ENCODE measurements at regions of chr10 and their contacts with region 1.

Region 1: GRCh38 chr10:110210674-110211464 is 3.5 kb downstream of the MXI1 start:
- DNase-seq: peak; percentile 96 to 97
- ATAC-seq: peak; percentile 93
- H3K4me3 ChIP-seq: peak overlapping the region; percentile 78 to 94 (median 84)
- H3K27ac ChIP-seq: peak overlapping the region; percentile 89 to 98 (median 98)
- H3K4me1 ChIP-seq: peaks cover 6 to 27% of the 10 kb centered on the region in 2 donors
- H3K27me3 ChIP-seq: no peaks in the 10 kb centered on the region
- CTCF ChIP-seq: no peak
- POLR2A ChIP-seq: peak; percentile 65 to 86

Region 2: DNA sequence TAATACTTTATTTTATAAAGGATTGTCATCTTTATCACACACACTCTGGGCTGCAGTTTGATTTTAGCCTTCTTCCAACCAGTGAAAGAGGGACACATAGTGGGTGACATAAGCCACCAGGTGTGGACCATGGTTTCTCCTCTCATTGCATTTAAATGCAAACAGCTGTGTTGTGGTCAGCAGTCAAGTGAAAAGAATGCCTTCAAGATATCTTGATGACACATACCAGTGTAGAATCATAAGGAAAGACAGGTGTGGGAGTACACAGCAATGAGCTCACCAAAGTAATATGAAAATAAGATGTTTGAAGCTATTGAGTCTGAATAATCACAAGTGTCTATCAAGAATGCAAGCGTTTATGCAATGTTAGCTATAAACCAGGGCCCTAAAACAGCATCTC is 867.6 kb before region 1 on chr10:
- in situ Hi-C with region 1: no loop called
- intact Hi-C with region 1: no loop called
- DNase-seq: no peak
- ATAC-seq: no peak
- H3K4me3 ChIP-seq: no peak overlapping the region
- H3K27ac ChIP-seq: no peak overlapping the region
- H3K4me1 ChIP-seq: no peaks in the 10 kb centered on the region
- H3K27me3 ChIP-seq: no peaks in the 10 kb centered on the region
- CTCF ChIP-seq: no peak
- POLR2A ChIP-seq: no peak

Region 3: GRCh38 chr10:110007701-110008517 is 203.0 kb before region 1 on chr10 and contains the start of gene ADD3:
- in situ Hi-C with region 1: no loop called
- intact Hi-C with region 1: loop called (anchors 2 kb)
- DNase-seq: peak; percentile 85
- ATAC-seq: peak; percentile 75 to 80
- H3K4me3 ChIP-seq: peak within 1 kb of the TSS; percentile 89 to 98 (median 94)
- H3K27ac ChIP-seq: peak within 1 kb of the TSS; percentile 82 to 89 (median 86)
- H3K4me1 ChIP-seq: peaks cover 11 to 19% of the 10 kb centered on the region in 2 donors
- H3K27me3 ChIP-seq: no peaks in the 10 kb centered on the region
- CTCF ChIP-seq: no peak
- POLR2A ChIP-seq: peak; percentile 26 to 59
- total RNA-seq, gene ADD3: 16.0 to 31.3 (median 18.4) TPM

Region 4: DNA sequence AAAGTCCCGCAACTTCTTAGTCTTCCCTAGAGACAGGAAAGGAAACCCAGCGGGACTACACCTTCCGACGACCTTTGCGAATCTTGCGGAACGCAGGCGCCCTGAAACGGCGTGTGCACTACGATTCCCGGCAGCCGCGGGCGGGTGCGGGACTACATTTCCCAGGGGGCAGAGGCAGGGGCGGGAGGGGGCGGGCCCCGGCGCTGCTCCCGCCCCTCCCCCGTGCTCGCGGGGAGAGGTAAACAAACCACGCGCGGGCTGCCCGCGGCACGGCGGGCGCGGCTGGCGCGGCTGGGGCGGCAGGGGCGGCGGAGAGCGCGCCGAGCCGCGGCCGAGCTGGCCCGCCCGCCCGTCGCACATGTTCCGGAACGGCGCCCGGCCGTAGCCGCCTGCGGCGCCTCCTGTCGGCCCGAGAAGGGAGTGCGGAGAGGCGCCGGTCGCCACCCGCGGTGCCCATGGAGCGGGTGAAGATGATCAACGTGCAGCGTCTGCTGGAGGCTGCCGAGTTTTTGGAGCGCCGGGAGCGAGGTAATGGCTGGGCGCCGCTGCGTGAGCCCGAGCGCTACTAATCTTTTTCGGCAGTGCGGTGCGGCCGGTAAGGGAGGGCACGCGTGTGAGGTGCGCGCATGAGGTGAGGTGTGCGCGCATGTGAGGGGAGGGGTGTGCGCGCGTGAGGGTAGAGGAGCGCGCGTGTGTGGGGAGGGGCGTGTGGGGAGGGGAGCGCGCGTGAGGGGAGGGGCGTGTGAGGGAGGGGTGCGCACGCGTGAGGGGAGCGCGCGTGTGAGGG is 15.1 kb after region 1 on chr10:
- in situ Hi-C with region 1: no loop called
- intact Hi-C with region 1: loop called (anchors 1 kb)
- DNase-seq: peak; percentile 87 to 90
- ATAC-seq: peak; percentile 73 to 77
- H3K4me3 ChIP-seq: peak overlapping the region; percentile 89 to 95 (median 93)
- H3K27ac ChIP-seq: peak overlapping the region; percentile 99 to 100 (median 99)
- H3K4me1 ChIP-seq: peaks cover 20 to 30% of the 10 kb centered on the region in 2 donors
- H3K27me3 ChIP-seq: no peaks in the 10 kb centered on the region
- CTCF ChIP-seq: peak; percentile 62 to 93 (median 87)
- POLR2A ChIP-seq: peak; percentile 72 to 86

Region 5: DNA sequence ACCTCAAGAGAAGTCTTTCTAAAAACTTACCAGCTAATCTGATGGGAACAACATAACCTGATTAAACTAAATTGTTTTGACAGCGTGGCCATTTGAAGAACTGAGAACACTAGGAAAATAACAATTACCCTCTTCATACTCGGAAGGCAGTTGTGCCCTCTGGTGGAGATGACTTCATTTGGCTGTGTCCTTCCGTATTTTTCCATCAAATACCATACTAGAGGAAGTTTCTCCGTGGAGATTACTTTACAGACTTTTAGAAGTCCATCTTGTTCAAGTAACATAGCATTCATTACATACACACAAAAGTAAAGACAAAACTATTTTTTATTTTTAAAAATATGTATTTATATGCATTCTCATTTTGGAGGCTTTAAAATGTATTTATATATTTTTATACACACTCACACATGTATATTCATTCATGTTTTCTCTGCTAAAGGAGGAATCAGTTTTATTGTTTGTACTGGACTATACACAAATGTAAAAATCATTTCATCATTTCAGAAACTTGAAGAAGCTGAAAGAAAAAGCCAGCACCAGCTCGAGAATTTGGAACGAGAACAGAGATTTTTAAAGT is 68.6 kb after region 1 on chr10:
- in situ Hi-C with region 1: loop called in 1 of 4 experiments (anchors 10 kb)
- intact Hi-C with region 1: loop called (anchors 1 kb)
- DNase-seq: peak; percentile 12 to 40
- ATAC-seq: peak; percentile 69 to 87
- H3K4me3 ChIP-seq: no peak overlapping the region
- H3K27ac ChIP-seq: peak overlapping the region in 1 of 4 donors; percentile 1
- H3K4me1 ChIP-seq: peaks cover 18 to 26% of the 10 kb centered on the region in 2 donors
- H3K27me3 ChIP-seq: no peaks in the 10 kb centered on the region
- CTCF ChIP-seq: peak; percentile 69 to 78 (median 74)
- POLR2A ChIP-seq: no peak

Region 6: DNA sequence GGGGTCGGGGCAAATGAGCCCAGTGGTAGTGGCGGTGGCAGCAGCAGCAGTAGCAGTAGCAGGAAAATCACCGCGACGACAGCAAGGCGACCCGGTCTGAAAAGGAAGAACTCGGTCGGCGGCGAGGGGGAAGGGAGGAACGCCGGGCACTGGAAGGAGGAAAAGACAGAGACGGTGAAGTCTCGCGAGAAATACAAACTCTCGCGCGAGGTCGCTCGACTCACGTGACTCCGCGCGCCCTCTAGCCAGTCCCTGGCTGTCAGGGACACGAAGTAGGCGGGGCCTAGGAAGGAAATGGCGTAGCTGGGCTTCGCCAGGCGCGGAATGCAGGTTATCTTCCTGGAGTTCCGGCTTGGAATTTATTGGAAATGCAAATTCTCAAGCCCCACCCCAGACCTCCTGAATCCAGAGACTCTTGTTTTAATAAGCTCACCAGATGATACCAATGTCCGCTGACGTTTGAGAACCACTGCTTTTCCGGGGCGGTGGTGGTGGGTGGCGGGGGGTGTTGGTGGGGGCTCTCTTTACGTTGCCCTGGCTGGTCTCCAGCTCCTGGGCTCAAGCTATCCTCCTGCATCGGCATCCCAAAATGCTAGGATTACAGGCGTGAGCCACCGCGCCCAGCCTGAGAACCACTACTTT is 94.0 kb after region 1 on chr10 and contains the start of gene SMNDC1:
- in situ Hi-C with region 1: no loop called
- intact Hi-C with region 1: loop called (anchors 1 kb)
- DNase-seq: peak; percentile 94 to 97
- ATAC-seq: peak; percentile 93 to 96
- H3K4me3 ChIP-seq: peak within 1 kb of the TSS; percentile 74 to 88 (median 86)
- H3K27ac ChIP-seq: peak within 1 kb of the TSS; percentile 91 to 95 (median 94)
- H3K4me1 ChIP-seq: peaks cover 42 to 45% of the 10 kb centered on the region in 2 donors
- H3K27me3 ChIP-seq: no peaks in the 10 kb centered on the region
- CTCF ChIP-seq: no peak
- POLR2A ChIP-seq: peak; percentile 68 to 69
- total RNA-seq, gene SMNDC1: 7.3 to 23.9 (median 10.0) TPM

Region 7: DNA sequence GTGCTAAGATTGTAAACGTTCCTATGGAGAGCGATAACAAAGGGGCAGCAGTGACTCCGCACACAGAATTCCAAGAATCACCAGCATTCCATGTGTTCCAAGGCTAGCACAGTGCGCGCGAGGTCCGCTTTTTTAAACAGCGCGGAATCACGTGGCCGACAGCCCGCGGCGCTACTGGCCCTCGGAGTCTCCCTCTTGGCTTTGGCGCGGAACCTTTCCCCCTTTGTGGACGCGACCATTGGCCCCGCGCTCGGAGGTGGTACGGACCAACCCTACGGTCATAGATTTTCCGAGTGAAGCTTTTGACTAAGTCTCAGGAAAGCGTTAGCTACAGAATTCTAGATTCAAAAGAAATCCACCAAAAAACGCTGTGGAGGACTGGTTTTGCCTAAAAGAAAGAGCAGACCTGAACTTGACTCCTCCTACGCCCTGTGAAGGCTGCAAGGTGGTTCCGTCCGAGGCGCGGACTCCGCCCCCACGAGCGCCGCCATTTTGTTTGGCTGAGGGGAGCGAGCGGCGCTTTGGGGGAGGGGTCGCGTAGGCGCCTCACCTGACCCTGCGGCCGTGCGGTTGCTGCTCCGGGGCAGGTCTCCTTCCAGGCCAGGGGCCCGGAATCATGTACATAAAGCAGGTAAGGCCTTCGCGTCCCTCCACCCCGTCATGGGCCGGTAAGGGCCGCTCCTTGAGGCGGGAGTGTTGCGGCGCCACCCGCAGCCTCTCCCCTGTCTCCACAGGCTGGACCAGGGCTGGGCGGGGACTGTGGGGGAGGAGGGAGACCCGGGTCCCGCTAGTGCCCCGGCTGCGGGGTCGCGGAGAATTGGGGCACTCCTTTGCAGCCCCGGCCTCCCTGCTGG is 356.6 kb after region 1 on chr10 and contains the start of gene SMC3:
- in situ Hi-C with region 1: no loop called
- intact Hi-C with region 1: loop called (anchors 2 kb)
- DNase-seq: peak; percentile 82 to 87
- ATAC-seq: peak; percentile 95 to 96
- H3K4me3 ChIP-seq: peak within 1 kb of the TSS; percentile 86 to 100 (median 93)
- H3K27ac ChIP-seq: peak within 1 kb of the TSS; percentile 93 to 99 (median 96)
- H3K4me1 ChIP-seq: peaks cover 36% of the 10 kb centered on the region in 2 donors
- H3K27me3 ChIP-seq: peaks cover 0 to 5% (median 2%) of the 10 kb centered on the region in 3 donors
- CTCF ChIP-seq: no peak
- POLR2A ChIP-seq: peak; percentile 63 to 65
- total RNA-seq, gene SMC3: 19.5 to 25.9 (median 21.9) TPM

Measured in gastrocnemius medialis (tissue), 4 donors.